ENCODE measurements at regions of chr16 and their contacts with region 1.

Region 1: GRCh38 chr16:30902029-30902972 is 5.9 kb downstream of the CTF1 start:
- DNase-seq: peak; percentile 87
- ATAC-seq: peak; percentile 77
- H3K4me3 Mint-ChIP-seq: peak overlapping the region; percentile 99
- H3K27ac Mint-ChIP-seq: peak overlapping the region; percentile 100
- H3K4me1 Mint-ChIP-seq: peaks cover 36% of the 10 kb centered on the region
- H3K27me3 Mint-ChIP-seq: no peaks in the 10 kb centered on the region

Region 2: DNA sequence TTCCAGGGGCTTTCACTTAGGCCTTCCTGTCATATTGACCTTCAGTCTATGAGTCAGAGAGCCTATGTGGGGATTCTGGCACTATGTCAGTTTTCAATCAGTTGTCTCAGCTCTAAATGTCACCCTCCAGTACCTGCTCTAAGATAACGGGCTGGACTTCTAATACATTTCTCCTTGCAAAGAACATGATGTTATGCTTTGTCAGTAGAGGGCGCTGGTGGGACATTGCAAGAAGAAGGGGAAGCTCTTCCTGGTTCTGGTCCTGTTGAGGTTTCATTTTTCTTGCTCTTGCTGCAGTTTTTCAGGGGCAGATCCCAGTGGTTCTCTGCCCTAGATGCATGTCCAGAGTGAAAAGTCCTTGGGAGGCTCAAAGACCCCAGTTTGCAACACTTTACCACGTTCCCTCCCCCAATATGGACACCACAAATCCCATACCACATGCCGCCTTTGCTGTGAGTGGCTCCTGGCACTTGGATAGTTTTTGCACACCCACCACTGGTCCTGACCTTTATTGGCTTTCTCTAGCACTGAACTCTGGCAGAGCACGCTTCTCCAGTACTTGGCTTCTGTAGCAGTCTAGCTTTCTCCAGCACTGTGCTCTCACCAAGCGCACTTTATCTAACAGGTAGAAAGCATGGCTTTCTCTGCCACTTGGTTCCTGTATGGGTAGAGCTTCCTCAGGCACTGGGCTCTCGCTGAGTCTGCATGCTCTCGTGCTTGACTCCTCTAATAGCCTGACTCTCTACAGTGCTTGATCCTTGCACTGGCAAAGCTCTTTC is 57.4 kb before region 1 on chr16:
- POLR2A ChIA-PET with region 1: interaction called, 50 read pairs
- DNase-seq: peak; percentile 65
- ATAC-seq: peak; percentile 91
- H3K4me3 Mint-ChIP-seq: peak overlapping the region; percentile 55
- H3K27ac Mint-ChIP-seq: peak overlapping the region; percentile 75
- H3K4me1 Mint-ChIP-seq: peaks cover 12% of the 10 kb centered on the region
- H3K27me3 Mint-ChIP-seq: peaks cover 2% of the 10 kb centered on the region

Region 3: DNA sequence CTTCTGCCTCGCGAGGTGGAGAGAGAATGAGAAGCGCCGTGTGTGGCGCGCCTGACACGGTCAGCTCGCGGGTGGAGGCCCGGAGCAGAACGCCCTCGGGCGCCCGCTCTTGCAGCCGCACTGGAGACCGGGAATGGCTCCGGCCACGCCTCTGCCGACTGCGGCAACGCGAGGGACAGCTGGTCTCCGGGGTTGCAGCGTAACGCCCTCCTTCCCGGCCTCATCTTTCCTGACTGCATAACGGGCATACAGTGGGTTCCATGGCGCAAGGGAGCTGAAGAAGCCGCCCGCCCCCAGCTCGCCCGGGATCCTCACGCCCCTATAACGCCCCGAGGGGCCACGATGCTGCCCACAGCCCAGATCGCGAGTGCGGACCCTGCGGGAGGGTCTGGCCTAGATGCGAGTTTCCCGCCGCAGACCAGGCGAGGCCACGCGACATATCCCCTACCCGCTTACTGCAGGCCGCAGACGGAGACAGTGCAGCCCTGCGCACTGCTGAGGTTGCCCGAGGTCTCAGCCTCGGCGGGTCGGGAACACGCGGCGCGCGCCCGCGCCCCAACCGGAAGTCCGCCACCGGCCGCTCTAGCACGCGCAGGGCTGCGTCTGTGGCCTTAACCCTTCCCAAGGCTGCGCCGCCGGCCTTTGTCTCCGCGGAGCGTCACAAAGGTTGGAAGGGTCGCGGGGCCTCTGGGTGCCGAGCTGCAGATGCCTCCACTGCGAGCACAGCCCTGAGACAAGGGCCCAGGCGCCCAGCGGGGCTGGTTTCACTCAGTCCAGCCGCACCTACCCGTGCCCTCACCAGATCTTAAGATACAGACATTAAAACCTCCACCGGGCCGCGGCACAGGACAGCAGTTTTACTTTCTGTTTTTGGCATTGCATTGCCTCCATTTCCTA is 27.2 kb before region 1 on chr16:
- POLR2A ChIA-PET with region 1: interaction called, 82 read pairs
- DNase-seq: peak; percentile 93
- ATAC-seq: peak; percentile 88
- H3K4me3 Mint-ChIP-seq: peak overlapping the region; percentile 98
- H3K27ac Mint-ChIP-seq: peak overlapping the region; percentile 94
- H3K4me1 Mint-ChIP-seq: peaks cover 16% of the 10 kb centered on the region
- H3K27me3 Mint-ChIP-seq: no peaks in the 10 kb centered on the region

Region 4: GRCh38 chr16:30882429-30883310 is 19.6 kb before region 1 on chr16:
- POLR2A ChIA-PET with region 1: interaction called, 82 read pairs
- DNase-seq: no peak
- ATAC-seq: peak; percentile 69
- H3K4me3 Mint-ChIP-seq: peak overlapping the region; percentile 43
- H3K27ac Mint-ChIP-seq: peak overlapping the region; percentile 89
- H3K4me1 Mint-ChIP-seq: peaks cover 23% of the 10 kb centered on the region
- H3K27me3 Mint-ChIP-seq: no peaks in the 10 kb centered on the region